ENCODE measurements at regions of chr16 and their contacts with region 1.

Region 1: GRCh38 chr16:22077700-22078313 is 14.5 kb upstream of the VWA3A start:
- DNase-seq: peak; percentile 26
- H3K4me3 ChIP-seq: no peak overlapping the region
- H3K27ac ChIP-seq: no peak overlapping the region
- H3K27me3 ChIP-seq: no peaks in the 10 kb centered on the region
- CTCF ChIP-seq: peak; percentile 87

Region 2: DNA sequence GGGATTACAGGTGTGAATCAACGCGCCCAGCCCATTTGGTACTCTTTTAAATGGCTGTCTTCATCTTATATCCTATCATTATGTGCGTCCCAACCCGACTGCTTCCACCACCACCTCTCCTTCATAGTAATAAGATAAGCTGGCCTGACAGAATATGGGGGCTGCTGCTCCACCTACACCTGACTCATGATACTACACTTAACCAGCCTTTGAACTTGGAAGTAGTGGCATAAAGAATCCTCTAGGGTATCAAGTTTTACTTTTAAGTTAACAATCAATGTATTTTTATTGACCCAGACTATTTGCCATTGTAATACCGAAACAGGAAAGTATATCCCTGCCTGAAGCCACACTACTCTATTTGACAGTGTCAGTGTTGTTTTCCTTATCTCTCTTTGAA is 95.7 kb before region 1 on chr16:
- CTCF ChIA-PET with region 1: interaction called, 12 read pairs
- POLR2A ChIA-PET with region 1: no interaction called
- DNase-seq: no peak
- H3K4me3 ChIP-seq: no peak overlapping the region
- H3K27ac ChIP-seq: no peak overlapping the region
- H3K27me3 ChIP-seq: no peaks in the 10 kb centered on the region
- CTCF ChIP-seq: no peak

Region 3: DNA sequence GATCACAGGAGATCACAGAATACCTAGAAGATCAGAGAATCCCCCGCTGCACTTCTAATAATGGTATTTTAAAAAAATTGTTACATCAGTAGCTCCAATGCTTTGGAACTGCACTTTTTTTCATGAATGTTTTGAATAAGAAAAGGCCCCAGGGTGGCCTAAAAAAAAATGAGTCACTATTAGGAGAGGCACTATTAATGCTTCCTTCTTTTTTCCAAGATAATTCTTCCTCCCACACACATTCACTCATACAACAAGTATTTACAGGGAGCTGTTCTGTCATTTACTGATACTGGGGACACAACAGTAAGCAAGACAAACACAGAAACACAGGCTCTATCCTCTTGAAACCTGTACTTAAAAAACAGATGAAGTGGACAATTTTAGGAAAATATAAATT is 76.2 kb before region 1 on chr16:
- CTCF ChIA-PET with region 1: interaction called, 365 read pairs
- POLR2A ChIA-PET with region 1: interaction called, 10 read pairs
- DNase-seq: peak; percentile 13
- H3K4me3 ChIP-seq: no peak overlapping the region
- H3K27ac ChIP-seq: no peak overlapping the region
- H3K27me3 ChIP-seq: no peaks in the 10 kb centered on the region
- CTCF ChIP-seq: no peak

Region 4: GRCh38 chr16:22023505-22023904 is 54.3 kb before region 1 on chr16:
- CTCF ChIA-PET with region 1: interaction called, 69 read pairs
- POLR2A ChIA-PET with region 1: no interaction called
- DNase-seq: no peak
- H3K4me3 ChIP-seq: no peak overlapping the region
- H3K27ac ChIP-seq: no peak overlapping the region
- H3K27me3 ChIP-seq: no peaks in the 10 kb centered on the region
- CTCF ChIP-seq: no peak

Region 5: DNA sequence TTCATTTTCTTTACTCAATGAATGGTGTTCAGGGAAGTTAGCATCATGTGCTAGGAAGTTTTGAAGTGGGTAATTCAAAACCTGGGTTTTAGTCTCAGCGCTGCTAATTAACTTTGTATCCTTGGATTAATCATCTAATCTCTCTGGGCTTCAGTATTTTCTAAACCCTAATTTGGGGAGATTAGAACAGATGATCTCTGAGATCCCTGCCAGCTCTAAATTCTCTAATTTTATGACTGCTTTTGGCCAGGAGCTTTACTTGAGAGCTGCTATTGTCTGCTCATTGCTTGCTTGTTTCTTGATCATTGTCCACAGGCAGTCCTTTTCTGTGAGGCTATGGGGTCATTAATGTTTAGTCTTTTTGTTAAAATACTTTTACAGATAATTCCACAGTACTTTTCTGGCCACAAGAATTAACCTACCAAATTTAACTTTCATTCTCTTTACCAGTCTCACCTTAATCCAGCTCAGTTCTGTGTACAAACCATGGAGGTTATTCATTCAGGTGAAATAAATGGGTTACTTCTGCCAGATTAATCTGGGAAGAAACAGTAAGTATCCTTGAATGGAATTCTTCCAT is 13.8 kb before region 1 on chr16:
- CTCF ChIA-PET with region 1: interaction called, 86 read pairs
- POLR2A ChIA-PET with region 1: no interaction called
- DNase-seq: no peak
- H3K4me3 ChIP-seq: no peak overlapping the region
- H3K27ac ChIP-seq: no peak overlapping the region
- H3K27me3 ChIP-seq: no peaks in the 10 kb centered on the region
- CTCF ChIP-seq: no peak

Region 6: DNA sequence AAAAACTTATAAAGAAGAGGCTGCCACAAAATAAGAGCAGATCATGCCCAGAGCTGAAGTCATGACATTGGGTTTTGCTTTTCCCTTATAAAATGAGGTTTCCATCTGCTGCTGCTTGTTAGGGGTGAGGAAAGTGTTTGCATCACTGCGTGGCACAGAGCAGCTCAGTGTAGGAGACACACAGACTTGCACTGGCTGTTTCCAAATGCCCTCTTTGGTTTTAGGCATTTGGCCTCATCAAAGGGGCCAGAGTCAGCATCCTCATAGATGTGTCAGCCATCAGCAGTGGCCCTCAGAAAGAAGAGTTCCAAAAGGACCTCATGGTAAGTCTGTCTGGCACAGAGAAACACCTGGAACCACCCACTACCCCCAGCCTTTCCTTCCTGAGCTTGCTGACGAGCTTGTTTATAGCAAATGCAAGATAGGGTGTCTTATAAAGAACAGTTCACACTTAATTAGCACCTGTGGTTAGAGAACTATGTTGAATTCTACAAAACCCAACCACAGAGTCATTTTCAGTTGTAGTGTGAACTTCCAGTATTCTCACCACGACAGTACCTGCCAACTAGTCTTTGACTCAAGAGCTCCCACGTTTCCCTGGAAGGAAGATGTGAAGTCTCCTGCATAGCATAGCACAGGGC is 31.6 kb after region 1 on chr16:
- CTCF ChIA-PET with region 1: interaction called, 10 read pairs
- POLR2A ChIA-PET with region 1: no interaction called
- DNase-seq: no peak
- H3K4me3 ChIP-seq: no peak overlapping the region
- H3K27ac ChIP-seq: no peak overlapping the region
- H3K27me3 ChIP-seq: peaks cover 28% of the 10 kb centered on the region
- CTCF ChIP-seq: no peak

Measured in AG04450 (cell line).